Posterior vena cava (tissue), 2 donors: ENCODE measurements at regions of chr1 and their contacts with region 1.

Region 1: DNA sequence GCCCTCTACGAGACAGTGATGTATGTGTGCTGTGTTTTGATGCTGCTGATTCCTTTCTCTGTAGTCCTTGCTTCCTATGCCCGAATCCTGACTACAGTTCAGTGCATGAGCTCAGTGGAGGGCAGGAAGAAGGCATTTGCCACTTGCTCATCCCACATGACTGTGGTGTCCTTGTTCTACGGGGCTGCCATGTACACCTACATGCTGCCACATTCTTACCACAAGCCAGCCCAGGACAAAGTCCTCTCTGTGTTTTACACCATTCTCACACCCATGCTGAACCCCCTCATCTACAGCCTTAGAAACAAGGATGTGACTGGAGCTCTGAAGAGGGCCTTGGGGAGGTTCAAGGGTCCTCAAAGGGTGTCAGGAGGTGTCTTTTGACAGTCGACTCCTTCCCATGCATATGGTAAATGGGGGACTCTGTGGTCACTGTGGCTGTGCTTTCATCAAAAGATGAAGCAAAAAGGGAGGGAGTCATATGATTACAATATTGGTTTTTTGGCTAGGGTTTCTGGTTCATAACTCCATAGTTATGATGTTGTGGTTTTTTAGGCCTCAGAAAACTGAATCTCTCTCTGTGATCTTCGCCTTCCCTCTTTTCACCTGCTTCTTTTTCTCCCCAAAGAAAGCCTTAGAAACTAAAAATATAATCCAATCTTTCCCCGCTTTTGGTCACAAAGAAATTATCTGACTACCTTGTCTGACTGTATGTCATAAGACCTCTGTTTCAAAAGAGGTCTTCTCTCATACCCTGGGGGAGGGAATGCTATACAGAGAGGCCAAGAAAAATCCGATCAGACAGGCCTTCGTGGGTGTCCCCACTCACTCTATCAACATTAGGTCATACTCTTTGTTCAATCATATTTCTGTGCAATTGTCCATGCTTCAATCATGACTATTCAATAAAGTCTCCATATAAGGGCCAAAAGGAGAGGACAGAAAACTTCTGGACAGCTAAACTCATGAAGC is 4.2 kb downstream of the OR2T1 start:
- DNase-seq: no peak

Region 2: GRCh38 chr1:248316796-248317195 is 90.2 kb before region 1 on chr1:
- intact Hi-C with region 1: no loop called
- DNase-seq: no peak

Region 3: DNA sequence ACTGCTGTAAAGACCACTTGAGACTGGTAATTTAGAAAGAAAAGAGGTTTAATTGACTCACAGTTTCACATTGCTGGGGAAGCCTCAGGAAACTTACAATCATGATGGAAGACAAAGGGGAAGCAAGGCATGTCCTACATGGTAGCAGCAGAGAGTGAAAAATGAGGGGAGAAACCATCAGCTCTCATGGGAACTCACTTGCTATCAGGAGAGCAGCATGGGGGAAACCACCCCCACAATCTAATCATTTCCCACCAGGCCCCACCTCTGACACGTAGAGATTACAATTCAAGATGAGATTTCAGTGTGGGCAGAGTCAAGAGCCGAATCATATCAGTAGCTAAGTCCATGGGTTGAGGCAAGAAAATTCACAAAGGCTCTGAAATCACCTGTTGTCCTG is 372.3 kb after region 1 on chr1:
- intact Hi-C with region 1: loop called in 1 of 2 experiments (anchors 5 kb)
- DNase-seq: no peak